Dorsolateral prefrontal cortex (tissue), 120 donors: ENCODE measurements at regions of chr20 and their contacts with region 1.

Region 1: GRCh38 chr20:58839474-58839874 is 11.2 kb downstream of the GNAS-AS1 start:
- DNase-seq: peak in 5 of 10 donors; percentile 15 to 60 (median 27)
- H3K4me3 ChIP-seq: peak overlapping the region in 35 of 59 donors; percentile 4 to 44 (median 24)
- H3K27ac ChIP-seq: no peak overlapping the region
- H3K27me3 ChIP-seq: peaks cover 0 to 68% (median 37%) of the 10 kb centered on the region in 45 donors
- CTCF ChIP-seq: peak in 48 of 56 donors; percentile 12 to 59 (median 40)

Region 2: DNA sequence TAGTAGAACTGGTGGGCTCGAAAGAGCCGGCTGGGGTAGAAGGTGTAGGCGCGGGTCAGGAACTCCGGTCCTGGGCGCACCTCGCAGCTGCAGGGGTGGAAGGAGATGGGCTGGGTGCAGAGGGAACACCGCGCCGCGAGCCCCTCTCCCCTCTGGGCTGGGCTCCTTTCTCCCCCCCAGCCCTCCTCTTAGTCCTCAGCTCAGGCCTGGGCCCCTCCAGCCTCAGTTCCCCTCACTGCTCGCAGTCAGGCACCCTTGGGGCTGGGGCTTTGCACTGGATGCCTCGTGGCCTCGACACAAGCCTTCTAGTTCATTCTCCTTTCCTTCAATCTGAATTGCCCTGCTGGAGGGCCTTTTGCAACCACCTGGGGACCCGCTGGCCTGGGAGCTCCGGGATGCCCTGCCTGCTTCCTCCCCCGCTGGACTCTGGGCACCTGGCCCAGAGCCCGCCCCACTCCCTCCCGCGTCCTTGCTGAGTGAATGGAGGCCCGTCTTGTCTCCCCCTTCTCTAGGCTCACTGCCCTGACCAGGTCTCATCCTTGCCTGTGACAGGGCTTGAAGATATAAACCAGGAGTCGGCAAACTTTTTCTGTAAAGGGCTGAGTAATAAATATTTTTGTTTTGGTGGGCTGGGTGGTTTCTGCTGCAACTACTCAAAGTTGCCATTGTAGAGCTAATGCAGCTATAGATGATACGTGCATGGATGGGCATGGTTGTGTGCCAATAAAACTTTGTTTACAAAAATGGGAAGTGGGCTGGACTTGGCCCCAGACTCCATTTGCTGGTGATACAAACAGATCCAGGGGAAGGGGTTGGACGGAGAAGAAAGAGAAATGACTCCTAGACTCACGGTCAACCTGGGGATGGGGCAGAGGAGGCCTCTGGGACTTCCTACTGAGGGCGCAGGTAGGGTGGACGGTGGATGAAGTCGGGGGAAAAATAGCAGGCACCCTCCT is 371.6 kb before region 1 on chr20:
- intact Hi-C with region 1: loop called in 1 of 2 experiments (anchors 10 kb)
- DNase-seq: no peak
- H3K4me3 ChIP-seq: no peak overlapping the region
- H3K27ac ChIP-seq: no peak overlapping the region
- H3K27me3 ChIP-seq: no peaks in the 10 kb centered on the region
- CTCF ChIP-seq: no peak

Region 3: GRCh38 chr20:58634521-58635278 is 204.8 kb before region 1 on chr20:
- intact Hi-C with region 1: loop called in 1 of 2 experiments (anchors 10 kb)
- DNase-seq: no peak
- H3K4me3 ChIP-seq: no peak overlapping the region
- H3K27ac ChIP-seq: no peak overlapping the region
- H3K27me3 ChIP-seq: peaks cover 0 to 7% (median 0%) of the 10 kb centered on the region in 45 donors
- CTCF ChIP-seq: no peak

Region 4: GRCh38 chr20:58778760-58779159 is 60.7 kb before region 1 on chr20:
- intact Hi-C with region 1: no loop called
- DNase-seq: no peak
- H3K4me3 ChIP-seq: no peak overlapping the region
- H3K27ac ChIP-seq: no peak overlapping the region
- H3K27me3 ChIP-seq: peaks cover 0 to 26% (median 0%) of the 10 kb centered on the region in 45 donors
- CTCF ChIP-seq: no peak